ENCODE measurements at regions of chr2 and their contacts with region 1.

Region 1: GRCh38 chr2:143110758-143111428 is 18.3 kb upstream of the ARHGAP15 start:
- DNase-seq: peak; percentile 38
- H3K4me3 ChIP-seq: no peak overlapping the region; a peak in 1 of 4 replicates
- H3K27ac ChIP-seq: no peak overlapping the region
- H3K4me1 ChIP-seq: no peaks in the 10 kb centered on the region
- H3K27me3 ChIP-seq: no peaks in the 10 kb centered on the region
- CTCF ChIP-seq: peak; percentile 83
- EP300 ChIP-seq: no peak
- RAD21 ChIP-seq: peak; percentile 75

Region 2: DNA sequence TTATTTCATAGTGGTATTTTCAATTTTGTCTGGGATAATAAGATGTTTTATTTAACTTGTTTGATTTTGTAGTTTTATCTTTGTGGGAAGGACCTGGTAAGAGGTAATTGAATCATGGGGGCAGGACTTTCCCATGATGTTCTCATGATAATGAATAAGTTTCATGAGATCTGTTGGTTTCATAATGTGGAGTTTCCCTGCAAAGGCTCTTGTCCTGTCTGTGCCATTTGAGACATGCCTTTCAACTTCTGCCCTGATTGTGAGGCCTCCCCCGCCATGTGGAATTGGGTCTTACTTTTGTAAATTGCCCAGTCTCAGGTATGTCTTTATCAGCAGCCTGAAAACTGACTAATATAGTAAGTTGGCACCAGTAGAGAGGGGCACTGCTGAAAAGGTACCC is 59.4 kb before region 1 on chr2:
- CTCF ChIA-PET with region 1: no interaction called
- POLR2A ChIA-PET with region 1: no interaction called
- DNase-seq: no peak
- H3K4me3 ChIP-seq: no peak overlapping the region
- H3K27ac ChIP-seq: no peak overlapping the region
- H3K4me1 ChIP-seq: no peaks in the 10 kb centered on the region
- H3K27me3 ChIP-seq: no peaks in the 10 kb centered on the region
- CTCF ChIP-seq: no peak
- EP300 ChIP-seq: no peak
- RAD21 ChIP-seq: no peak

Region 3: GRCh38 chr2:143121957-143122356 is 11.1 kb after region 1 on chr2:
- CTCF ChIA-PET with region 1: interaction called, 12 read pairs
- POLR2A ChIA-PET with region 1: no interaction called
- DNase-seq: no peak
- H3K4me3 ChIP-seq: no peak overlapping the region
- H3K27ac ChIP-seq: no peak overlapping the region
- H3K4me1 ChIP-seq: no peaks in the 10 kb centered on the region
- H3K27me3 ChIP-seq: no peaks in the 10 kb centered on the region
- CTCF ChIP-seq: no peak
- EP300 ChIP-seq: no peak
- RAD21 ChIP-seq: no peak

Region 4: DNA sequence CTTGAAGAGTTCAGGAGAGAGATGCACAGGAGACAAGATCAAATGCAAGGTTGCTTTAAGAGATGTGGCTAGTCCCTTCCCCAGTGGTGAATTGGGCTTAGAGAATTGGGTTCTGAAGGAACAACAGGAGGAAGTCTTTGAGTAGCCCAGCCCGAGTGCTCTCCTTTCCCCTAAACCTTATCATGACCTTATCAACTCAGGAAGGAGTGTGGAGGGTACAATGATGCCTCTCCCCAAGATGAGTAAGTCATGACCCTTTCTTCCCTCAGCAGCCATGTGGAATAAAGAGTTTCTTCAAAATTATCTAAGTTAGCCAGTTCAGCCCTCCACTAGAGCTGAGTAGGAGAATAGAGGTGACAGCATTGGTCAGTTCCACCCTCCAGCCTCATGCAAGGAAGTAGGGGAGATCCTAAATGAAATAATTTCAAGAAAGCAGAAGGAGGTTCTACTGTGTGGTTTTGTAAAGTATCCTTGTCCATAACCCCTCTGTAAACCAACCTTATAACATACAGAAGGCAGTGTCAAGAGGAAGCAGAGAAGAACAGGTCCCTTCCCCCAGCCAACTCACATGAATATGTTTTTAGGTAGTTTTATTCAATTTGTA is 106.7 kb after region 1 on chr2:
- CTCF ChIA-PET with region 1: interaction called, 17 read pairs
- POLR2A ChIA-PET with region 1: no interaction called
- DNase-seq: no peak
- H3K4me3 ChIP-seq: no peak overlapping the region
- H3K27ac ChIP-seq: no peak overlapping the region
- H3K4me1 ChIP-seq: no peaks in the 10 kb centered on the region; a peak in 1 of 4 replicates
- H3K27me3 ChIP-seq: no peaks in the 10 kb centered on the region
- CTCF ChIP-seq: no peak
- EP300 ChIP-seq: no peak
- RAD21 ChIP-seq: no peak

Region 5: DNA sequence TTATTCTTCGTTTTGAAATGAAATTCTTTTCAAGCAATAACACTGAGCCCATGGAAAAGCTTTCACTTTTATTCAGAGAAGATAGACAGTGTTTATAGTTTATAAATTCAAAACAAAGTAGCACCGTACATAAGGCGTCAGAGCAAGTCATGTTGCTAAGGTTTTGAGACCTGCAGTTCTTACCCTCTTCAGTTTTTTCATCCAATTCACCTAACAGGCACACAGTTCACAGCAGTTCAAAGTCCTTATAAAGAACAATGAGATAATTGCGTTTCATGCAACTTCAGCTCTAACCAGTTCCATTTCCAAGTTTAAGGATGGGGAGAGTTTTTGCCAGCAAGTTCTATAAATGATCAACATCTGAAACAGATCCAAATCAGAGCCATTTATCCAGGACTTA is 115.0 kb after region 1 on chr2:
- CTCF ChIA-PET with region 1: interaction called, 17 read pairs
- POLR2A ChIA-PET with region 1: no interaction called
- DNase-seq: no peak
- H3K4me3 ChIP-seq: no peak overlapping the region
- H3K27ac ChIP-seq: no peak overlapping the region
- H3K4me1 ChIP-seq: peaks cover 0 to 3% of the 10 kb centered on the region in 2 experiments; a peak in 2 of 4 replicates
- H3K27me3 ChIP-seq: no peaks in the 10 kb centered on the region
- CTCF ChIP-seq: no peak
- EP300 ChIP-seq: no peak
- RAD21 ChIP-seq: no peak